Activated CD4-positive, alpha-beta T cell treated with anti-CD3 and anti-CD28 coated beads, Interleukin-2, amount 10 ng/mL, durations not matched to agents 24 days and 14 days (primary cell): ENCODE measurements at regions of chr2 and their contacts with region 1.

Region 1: GRCh38 chr2:96816128-96816835 is at the start of gene CNNM3:
- DNase-seq: peak; percentile 99
- H3K4me3 Mint-ChIP-seq: peak within 1 kb of the TSS; percentile 91
- H3K27ac Mint-ChIP-seq: peak within 1 kb of the TSS; percentile 86
- H3K4me1 Mint-ChIP-seq: peaks cover 50% of the 10 kb centered on the region
- H3K27me3 Mint-ChIP-seq: no peaks in the 10 kb centered on the region
- total RNA-seq, gene CNNM3: 29.4 and 30.5 TPM in 2 replicates

Region 2: DNA sequence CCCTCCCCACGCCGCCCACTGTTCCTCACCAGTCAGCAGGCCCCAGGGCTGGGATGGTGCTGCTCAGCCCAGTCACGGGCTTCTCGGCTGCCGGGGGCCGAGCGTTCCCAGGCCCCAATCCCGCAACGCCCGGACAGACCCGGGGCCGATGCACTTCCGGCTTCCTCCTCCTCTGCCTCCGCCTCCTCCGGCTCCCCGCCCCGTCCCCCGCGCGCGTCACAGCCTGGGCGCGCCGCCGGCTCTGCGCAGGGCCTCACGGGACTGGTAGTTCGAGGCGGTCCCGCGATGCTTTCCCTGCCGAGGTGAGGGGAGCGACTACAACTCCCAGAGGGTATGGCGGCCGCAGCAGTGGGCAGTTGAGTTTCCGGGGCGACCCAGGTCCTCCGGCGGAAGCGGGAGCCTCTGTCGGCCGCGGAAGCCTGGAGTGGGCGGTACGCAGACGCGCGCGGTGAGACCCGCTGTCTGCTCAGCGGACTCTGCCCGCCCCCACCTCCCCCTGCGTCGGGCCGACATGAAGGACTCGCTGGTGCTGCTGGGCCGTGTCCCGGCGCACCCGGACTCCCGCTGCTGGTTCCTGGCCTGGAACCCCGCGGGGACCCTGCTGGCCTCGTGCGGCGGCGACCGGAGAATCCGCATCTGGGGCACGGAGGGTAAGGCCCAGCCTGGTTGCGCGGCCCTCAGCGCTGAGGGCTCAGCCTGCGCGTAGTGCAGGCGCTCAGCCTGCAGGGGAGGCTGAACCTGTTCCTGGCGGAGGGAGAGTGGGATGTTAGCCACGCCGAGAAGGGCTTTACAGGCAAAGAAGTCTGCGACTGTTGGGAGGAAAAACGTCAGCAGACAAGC is 550.2 kb before region 1 on chr2 and contains the starts of genes CIAO1 and TMEM127:
- intact Hi-C with region 1: loop called (anchors 5 kb)
- DNase-seq: peak; percentile 100
- H3K4me3 Mint-ChIP-seq: peak within 1 kb of the TSS; percentile 99
- H3K27ac Mint-ChIP-seq: peak within 1 kb of the TSS; percentile 98
- H3K4me1 Mint-ChIP-seq: peaks cover 38% of the 10 kb centered on the region
- H3K27me3 Mint-ChIP-seq: no peaks in the 10 kb centered on the region
- total RNA-seq, gene CIAO1: 105 and 110 TPM in 2 replicates
- total RNA-seq, gene TMEM127: 31.6 and 33.1 TPM in 2 replicates

Region 3: DNA sequence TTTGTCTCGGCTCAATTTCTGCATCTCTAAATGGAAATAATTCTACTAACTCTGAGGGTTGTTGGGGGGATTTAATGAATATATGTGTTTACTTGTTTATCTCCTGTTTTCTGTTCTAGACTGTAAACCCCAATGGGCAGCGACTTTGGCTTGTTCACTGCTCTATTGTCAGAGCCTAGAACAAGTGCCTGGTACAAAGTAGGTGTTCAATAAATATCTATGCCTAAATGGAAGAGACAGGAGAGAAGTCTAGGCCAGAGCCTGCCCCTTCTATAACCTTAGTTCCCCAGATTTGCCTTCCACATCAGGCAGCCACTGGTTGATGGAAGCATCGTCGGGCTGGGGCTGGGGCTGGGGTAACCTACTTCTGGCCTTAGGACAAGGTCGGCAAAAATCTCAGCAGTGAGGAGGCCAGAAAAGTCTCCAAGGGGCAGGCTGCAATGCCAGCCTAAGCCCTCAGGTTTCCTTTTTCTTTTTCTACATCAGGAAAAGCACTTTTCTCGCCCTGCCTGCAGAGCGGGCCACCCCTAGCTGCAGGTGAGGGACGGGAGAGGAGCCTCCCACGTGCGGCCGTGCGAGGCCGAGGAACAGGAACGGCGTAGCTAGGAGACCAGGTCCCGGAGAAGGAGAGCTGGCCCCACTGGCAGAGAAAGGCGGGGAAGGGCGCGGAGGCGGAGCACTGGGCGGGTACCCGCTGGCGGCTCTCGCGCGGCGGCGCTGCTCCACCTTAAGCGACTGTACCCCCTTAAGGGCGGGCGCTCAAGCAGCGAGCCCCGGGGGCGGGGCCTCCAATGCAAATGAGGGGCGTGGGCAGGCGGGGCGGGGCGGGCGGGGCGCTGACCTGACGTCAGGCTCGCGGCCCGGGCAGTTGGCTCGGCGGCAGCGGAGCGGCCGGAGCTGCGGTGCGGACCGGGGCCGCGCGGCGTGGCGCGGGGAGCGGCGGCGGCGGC is 56.0 kb before region 1 on chr2 and contains the start of gene CNNM4:
- intact Hi-C with region 1: loop called (anchors 1 kb)
- DNase-seq: peak; percentile 97
- H3K4me3 Mint-ChIP-seq: peak within 1 kb of the TSS; percentile 85
- H3K27ac Mint-ChIP-seq: peak within 1 kb of the TSS; percentile 91
- H3K4me1 Mint-ChIP-seq: peaks cover 46% of the 10 kb centered on the region
- H3K27me3 Mint-ChIP-seq: no peaks in the 10 kb centered on the region
- total RNA-seq, gene CNNM4: 10.1 and 11.2 TPM in 2 replicates

Region 4: GRCh38 chr2:96856776-96857673 is 40.7 kb after region 1 on chr2:
- intact Hi-C with region 1: loop called (anchors 1 kb)
- DNase-seq: peak; percentile 82
- H3K4me3 Mint-ChIP-seq: peak overlapping the region; percentile 92
- H3K27ac Mint-ChIP-seq: peak overlapping the region; percentile 93
- H3K4me1 Mint-ChIP-seq: peaks cover 28% of the 10 kb centered on the region
- H3K27me3 Mint-ChIP-seq: no peaks in the 10 kb centered on the region

Region 5: GRCh38 chr2:96960153-96960961 is 144.1 kb after region 1 on chr2:
- intact Hi-C with region 1: loop called (anchors 1 kb)
- DNase-seq: peak; percentile 95
- H3K4me3 Mint-ChIP-seq: peak overlapping the region; percentile 65
- H3K27ac Mint-ChIP-seq: peak overlapping the region; percentile 84
- H3K4me1 Mint-ChIP-seq: peaks cover 52% of the 10 kb centered on the region
- H3K27me3 Mint-ChIP-seq: no peaks in the 10 kb centered on the region

Region 6: GRCh38 chr2:97005352-97005751 is 189.1 kb after region 1 on chr2:
- intact Hi-C with region 1: no loop called
- DNase-seq: no peak
- H3K4me3 Mint-ChIP-seq: no peak overlapping the region
- H3K27ac Mint-ChIP-seq: no peak overlapping the region
- H3K4me1 Mint-ChIP-seq: no peaks in the 10 kb centered on the region
- H3K27me3 Mint-ChIP-seq: peaks cover 45% of the 10 kb centered on the region